ENCODE measurements at regions of chr14 and their contacts with region 1.

Region 1: DNA sequence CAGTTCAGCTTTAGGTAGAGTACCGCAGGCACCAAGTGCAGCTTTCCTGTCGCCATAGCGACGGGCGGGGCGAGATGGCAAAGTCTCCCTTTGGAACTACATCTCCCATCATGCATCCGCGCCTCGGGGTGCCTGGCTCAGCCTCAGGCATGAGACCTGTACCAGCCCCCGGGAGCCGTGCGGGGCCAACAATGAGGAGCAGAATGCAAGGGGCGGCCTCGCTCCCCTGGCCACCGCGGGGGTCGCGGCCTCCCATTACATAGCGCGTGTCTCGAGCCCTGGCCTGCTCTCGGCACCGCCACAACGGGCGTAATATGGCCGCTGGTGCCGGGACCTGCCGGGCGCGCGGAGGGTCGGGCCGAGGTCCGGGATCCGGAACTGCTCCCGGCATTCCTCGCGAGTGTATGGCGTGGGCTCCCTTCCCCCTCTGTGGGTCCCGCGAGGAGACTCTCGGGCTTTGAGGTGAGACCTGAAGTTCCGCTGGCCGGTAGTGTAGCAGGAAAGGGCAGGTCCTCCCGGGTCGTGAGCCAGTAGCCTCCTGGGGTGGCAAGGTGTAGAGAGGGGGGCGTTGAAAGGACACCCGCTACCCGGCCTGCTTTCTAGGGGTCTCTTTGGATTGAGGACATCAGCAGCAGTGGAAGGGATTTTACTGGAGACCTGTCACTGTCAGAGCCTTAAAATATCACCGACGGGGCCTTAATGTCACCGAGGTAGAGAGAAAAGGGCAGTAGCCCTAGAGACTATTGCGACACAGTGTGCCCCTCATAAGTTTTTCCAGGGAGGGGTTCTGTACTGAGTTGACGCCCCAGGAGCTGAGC is at the start of gene THTPA:
- DNase-seq: peak; percentile 86

Region 2: GRCh38 chr14:23478111-23478759 is 77.9 kb before region 1 on chr14:
- CTCF ChIA-PET with region 1: interaction called, 53 read pairs
- POLR2A ChIA-PET with region 1: interaction called, 11 read pairs
- DNase-seq: peak; percentile 47

Region 3: GRCh38 chr14:23483236-23483854 is 72.7 kb before region 1 on chr14:
- CTCF ChIA-PET with region 1: interaction called, 53 read pairs
- POLR2A ChIA-PET with region 1: interaction called, 11 read pairs
- DNase-seq: peak; percentile 77

Region 4: GRCh38 chr14:23528555-23528954 is 27.5 kb before region 1 on chr14:
- CTCF ChIA-PET with region 1: interaction called, 3 read pairs
- POLR2A ChIA-PET with region 1: interaction called, 10 read pairs
- DNase-seq: no peak

Measured in HEK293T (cell line).